Calu3 (cell line): ENCODE measurements at regions of chr15 and their contacts with region 1.

Region 1: DNA sequence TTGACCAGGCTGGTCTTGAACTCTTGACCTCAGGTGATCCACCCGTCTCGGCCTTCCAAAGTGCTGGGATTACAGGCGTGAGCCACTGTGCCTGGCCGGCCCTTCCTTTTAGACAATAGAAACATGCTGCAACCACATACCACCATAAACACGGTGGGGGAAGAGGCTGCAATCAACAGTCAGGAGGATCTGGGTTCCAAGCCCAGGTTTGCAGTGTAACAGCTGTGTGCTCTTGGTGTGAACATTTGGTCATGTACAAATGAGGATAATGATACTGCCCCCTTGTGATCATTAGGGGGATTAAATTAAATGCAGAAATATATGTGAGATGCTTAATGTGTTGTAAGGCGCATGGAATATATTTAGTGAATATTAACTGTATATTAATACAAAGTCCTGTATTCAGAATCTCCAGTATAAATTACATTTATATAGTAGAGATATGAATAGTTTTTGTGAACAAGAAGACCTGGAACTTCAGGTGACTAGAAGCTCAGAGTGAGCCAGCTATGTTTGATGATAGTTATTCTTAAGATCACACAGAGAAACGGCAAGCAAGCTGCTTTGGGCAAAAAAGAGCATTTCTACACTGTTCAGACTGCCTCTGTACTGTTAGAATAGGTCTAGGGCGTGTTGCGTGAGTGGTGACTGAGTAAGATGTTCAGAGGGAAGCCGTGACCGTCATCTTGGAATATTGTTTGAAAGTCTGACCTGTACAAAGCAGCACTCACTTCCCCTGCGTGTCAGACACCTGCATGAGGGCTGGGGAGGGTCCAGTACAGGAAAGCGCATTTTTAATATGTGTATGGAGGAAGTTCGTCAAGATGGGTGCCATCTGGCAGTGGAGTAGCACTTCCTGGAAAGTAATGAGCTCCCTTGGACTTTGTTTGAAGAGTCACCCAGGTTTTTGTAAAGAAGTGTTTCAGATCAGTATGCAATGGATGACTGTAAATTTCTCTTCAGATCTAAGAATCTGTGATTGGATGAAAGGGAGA is 125.8 kb downstream of the PGPEP1L start:
- DNase-seq: no peak
- H3K4me3 Mint-ChIP-seq: no peak overlapping the region
- H3K27ac Mint-ChIP-seq: no peak overlapping the region
- H3K4me1 Mint-ChIP-seq: no peaks in the 10 kb centered on the region
- H3K27me3 Mint-ChIP-seq: no peaks in the 10 kb centered on the region
- CTCF ChIP-seq: peak; percentile 61

Region 2: DNA sequence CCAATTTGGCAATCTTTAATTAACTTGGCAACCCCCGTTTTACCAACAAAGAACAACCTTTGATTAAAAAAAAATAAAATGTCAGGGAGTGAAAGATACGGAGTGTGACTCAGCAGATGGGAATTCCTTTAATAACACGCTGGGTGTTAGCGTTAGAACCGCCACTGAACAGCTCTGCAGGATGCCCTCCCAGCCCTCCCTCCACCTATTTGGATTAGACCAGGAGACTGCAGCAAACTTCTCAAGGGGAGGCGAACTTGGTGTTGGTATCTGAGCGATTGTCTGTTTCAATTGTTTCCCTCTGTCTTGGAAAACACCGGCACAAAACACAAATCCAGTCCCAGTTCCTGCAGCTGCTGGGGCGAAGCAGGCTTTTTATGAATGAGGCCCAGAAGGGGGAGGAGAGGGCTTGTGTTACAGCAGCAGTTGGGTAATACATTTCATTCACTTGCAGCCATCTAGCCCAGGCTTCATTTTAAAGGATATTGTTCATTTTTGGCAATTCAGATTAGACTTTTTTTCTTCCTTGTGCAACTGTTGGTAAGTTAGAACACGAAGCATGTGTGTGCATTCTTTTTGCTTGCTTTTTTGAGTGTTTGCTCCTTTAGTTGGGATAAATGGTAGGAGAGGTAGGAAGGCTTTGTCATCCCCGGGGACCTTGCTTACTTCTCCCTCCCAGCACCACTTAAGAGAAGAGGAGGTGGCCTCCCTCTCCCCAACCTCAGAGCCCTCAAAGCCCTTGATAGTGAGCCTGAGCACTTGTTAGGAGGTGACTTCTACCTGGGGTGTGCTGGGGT is 81.2 kb before region 1 on chr15:
- CTCF ChIA-PET with region 1: no interaction called
- intact Hi-C with region 1: no loop called
- DNase-seq: peak; percentile 55
- H3K4me3 Mint-ChIP-seq: peak overlapping the region; percentile 52
- H3K27ac Mint-ChIP-seq: peak overlapping the region; percentile 83
- H3K4me1 Mint-ChIP-seq: peaks cover 82% of the 10 kb centered on the region
- H3K27me3 Mint-ChIP-seq: no peaks in the 10 kb centered on the region
- CTCF ChIP-seq: no peak

Region 3: DNA sequence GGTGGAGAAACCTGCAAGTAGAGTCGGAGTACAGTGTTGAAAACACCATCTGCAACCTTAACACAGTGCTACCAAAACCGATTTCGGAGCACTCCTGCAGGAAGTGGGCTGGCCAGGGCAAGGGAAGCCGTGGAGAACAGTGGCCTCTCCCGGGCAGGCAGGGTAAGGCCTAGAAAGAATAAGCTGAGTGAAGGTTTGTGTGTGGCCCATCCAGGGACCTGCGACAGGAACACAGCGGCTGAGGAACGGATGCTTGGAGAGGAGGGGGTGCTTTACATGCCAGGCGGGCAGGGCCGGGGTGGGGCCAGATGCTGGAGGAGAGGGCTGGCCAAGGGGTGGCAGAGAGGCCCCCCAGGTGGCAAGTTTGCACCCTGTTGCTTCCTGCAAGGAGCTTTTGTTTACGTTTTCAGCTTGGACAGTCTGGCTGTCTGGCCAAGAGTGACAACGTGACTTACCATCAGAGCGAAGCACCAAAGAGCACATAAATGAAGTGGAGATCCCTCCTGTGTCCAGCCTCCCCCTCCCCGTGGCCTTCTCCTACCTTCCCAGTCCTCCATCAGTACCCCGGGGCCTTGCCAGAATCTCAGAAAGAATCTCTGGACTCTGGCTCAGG is 30.8 kb before region 1 on chr15:
- CTCF ChIA-PET with region 1: no interaction called
- intact Hi-C with region 1: loop called (anchors 1 kb)
- DNase-seq: peak; percentile 87
- H3K4me3 Mint-ChIP-seq: peak overlapping the region; percentile 94
- H3K27ac Mint-ChIP-seq: peak overlapping the region; percentile 81
- H3K4me1 Mint-ChIP-seq: peaks cover 51% of the 10 kb centered on the region
- H3K27me3 Mint-ChIP-seq: no peaks in the 10 kb centered on the region
- CTCF ChIP-seq: peak; percentile 69